CD4-positive, alpha-beta memory T cell (primary cell): ENCODE measurements at regions of chr1 and their contacts with region 1.

Region 1: GRCh38 chr1:26126321-26127084 is 14.9 kb downstream of the PDIK1L start:
- DNase-seq: peak; percentile 86 to 94 (median 90)
- H3K4me3 ChIP-seq: peak overlapping the region in 1 of 2 donors; percentile 47
- H3K4me3 Mint-ChIP-seq: peak overlapping the region; percentile 79 to 92 (median 86)
- H3K27ac ChIP-seq: peak overlapping the region; percentile 55
- H3K27ac Mint-ChIP-seq: peak overlapping the region; percentile 83 to 99 (median 96)
- H3K4me1 ChIP-seq: peaks cover 63% of the 10 kb centered on the region
- H3K4me1 Mint-ChIP-seq: peaks cover 32 to 51% (median 42%) of the 10 kb centered on the region in 4 donors
- H3K27me3 ChIP-seq: no peaks in the 10 kb centered on the region
- H3K27me3 Mint-ChIP-seq: no peaks in the 10 kb centered on the region

Region 2: GRCh38 chr1:25239681-25240541 is 886.6 kb before region 1 on chr1:
- CTCF ChIA-PET with region 1: no interaction called
- POLR2A ChIA-PET with region 1: no interaction called
- intact Hi-C with region 1: loop called (anchors 10 kb)
- DNase-seq: peak; percentile 84 to 92 (median 84)
- H3K4me3 ChIP-seq: peak overlapping the region; percentile 19 to 69
- H3K4me3 Mint-ChIP-seq: peak overlapping the region; percentile 88 to 92 (median 90)
- H3K27ac ChIP-seq: peak overlapping the region; percentile 77
- H3K27ac Mint-ChIP-seq: peak overlapping the region; percentile 94 to 100 (median 96)
- H3K4me1 ChIP-seq: peaks cover 65% of the 10 kb centered on the region
- H3K4me1 Mint-ChIP-seq: peaks cover 32 to 63% (median 44%) of the 10 kb centered on the region in 4 donors
- H3K27me3 ChIP-seq: no peaks in the 10 kb centered on the region
- H3K27me3 Mint-ChIP-seq: no peaks in the 10 kb centered on the region

Region 3: DNA sequence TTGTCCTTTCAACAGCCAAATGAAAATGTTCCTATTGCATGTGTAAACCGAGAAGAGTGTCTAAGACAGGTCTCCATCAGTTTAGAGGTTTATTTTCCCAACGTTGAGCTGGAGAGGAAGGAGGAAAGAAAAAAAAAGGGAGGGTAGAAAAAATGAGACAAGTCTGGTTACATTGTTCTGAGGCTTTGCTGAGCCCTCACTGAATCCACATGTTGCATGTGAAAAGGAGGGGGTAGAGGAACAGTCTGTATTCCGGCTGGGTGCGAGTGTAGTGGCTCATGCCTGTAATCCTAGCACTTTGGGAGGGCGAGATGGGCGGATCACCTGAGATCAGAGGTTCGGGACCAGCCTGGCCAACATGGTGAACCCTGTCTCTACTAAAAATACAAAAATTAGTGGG is 34.1 kb before region 1 on chr1:
- CTCF ChIA-PET with region 1: no interaction called
- POLR2A ChIA-PET with region 1: no interaction called
- intact Hi-C with region 1: no loop called
- DNase-seq: no peak
- H3K4me3 ChIP-seq: no peak overlapping the region
- H3K4me3 Mint-ChIP-seq: no peak overlapping the region
- H3K27ac ChIP-seq: no peak overlapping the region
- H3K27ac Mint-ChIP-seq: no peak overlapping the region
- H3K4me1 ChIP-seq: no peaks in the 10 kb centered on the region
- H3K4me1 Mint-ChIP-seq: no peaks in the 10 kb centered on the region
- H3K27me3 ChIP-seq: no peaks in the 10 kb centered on the region
- H3K27me3 Mint-ChIP-seq: peaks cover 12 to 23% of the 10 kb centered on the region in 2 donors

Region 4: DNA sequence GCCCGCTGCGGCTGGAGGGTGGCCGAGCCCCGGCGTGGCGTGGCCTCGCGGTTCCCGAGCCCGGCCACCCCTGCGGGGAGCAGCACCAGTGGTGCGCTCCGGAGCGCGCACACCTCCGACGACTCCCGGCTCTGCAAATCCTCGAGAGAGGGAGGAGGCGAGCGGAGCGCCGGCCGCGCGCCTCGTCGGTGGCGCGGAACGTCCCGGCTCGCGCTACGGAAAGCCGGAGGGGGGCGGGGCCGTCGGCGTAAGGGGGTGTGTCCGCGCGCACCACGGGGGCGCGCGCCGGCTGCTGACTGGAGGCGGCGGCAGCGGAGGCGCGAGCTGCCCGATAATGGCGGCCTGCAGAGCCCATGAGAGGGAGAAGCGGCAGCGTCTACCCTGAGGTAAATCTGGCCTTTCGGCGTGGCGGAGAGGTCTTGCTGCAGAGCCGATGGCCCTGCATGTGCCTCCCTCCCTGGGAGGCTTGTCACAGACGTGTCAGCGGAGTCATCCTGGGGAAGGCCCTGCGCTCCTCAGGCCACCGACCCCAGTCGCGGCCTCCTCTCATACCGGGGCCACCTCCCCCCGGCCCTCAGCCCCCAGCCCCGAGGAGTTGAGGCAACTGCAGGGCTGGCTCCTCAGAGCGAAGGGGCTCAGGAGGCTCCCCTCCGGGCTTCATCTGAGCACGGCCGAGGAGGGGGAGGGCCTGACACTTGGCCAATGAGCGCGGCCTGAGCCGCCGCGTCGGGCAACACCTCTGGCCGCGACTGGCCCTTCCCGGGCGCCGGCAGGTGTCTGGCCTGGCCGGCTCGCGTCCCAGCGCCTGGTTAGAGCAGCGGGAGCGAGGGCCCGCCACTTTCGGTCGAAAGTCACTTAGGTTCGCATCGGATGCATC is 14.7 kb before region 1 on chr1 and contains the start of gene PDIK1L:
- CTCF ChIA-PET with region 1: interaction called, 33 read pairs
- POLR2A ChIA-PET with region 1: interaction called, 189 read pairs
- intact Hi-C with region 1: loop called (anchors 1 kb)
- DNase-seq: peak; percentile 93 to 94 (median 94)
- H3K4me3 ChIP-seq: peak within 1 kb of the TSS; percentile 49 to 91
- H3K4me3 Mint-ChIP-seq: peak within 1 kb of the TSS; percentile 92 to 96 (median 95)
- H3K27ac ChIP-seq: peak within 1 kb of the TSS; percentile 77
- H3K27ac Mint-ChIP-seq: peak within 1 kb of the TSS; percentile 88 to 98 (median 94)
- H3K4me1 ChIP-seq: peaks cover 34% of the 10 kb centered on the region
- H3K4me1 Mint-ChIP-seq: peaks cover 15 to 41% (median 32%) of the 10 kb centered on the region in 4 donors
- H3K27me3 ChIP-seq: no peaks in the 10 kb centered on the region
- H3K27me3 Mint-ChIP-seq: no peaks in the 10 kb centered on the region
- total RNA-seq, gene PDIK1L: 20.1 to 25.0 TPM

Region 5: GRCh38 chr1:26138974-26139558 is 12.6 kb after region 1 on chr1:
- CTCF ChIA-PET with region 1: interaction called, 199 read pairs
- POLR2A ChIA-PET with region 1: interaction called, 48 read pairs
- intact Hi-C with region 1: no loop called
- DNase-seq: no peak
- H3K4me3 ChIP-seq: no peak overlapping the region
- H3K4me3 Mint-ChIP-seq: no peak overlapping the region
- H3K27ac ChIP-seq: no peak overlapping the region
- H3K27ac Mint-ChIP-seq: peak overlapping the region in 4 of 7 donors; percentile 18 to 72 (median 40)
- H3K4me1 ChIP-seq: peaks cover 10% of the 10 kb centered on the region
- H3K4me1 Mint-ChIP-seq: peaks cover 6 to 8% (median 8%) of the 10 kb centered on the region in 4 donors
- H3K27me3 ChIP-seq: no peaks in the 10 kb centered on the region
- H3K27me3 Mint-ChIP-seq: no peaks in the 10 kb centered on the region